BJ (cell line): ENCODE measurements at regions of chr9 and their contacts with region 1.

Region 1: GRCh38 chr9:121686930-121687541 is 35.6 kb downstream of the DAB2IP start:
- DNase-seq: no peak
- H3K4me3 ChIP-seq: no peak overlapping the region
- H3K27me3 ChIP-seq: no peaks in the 10 kb centered on the region
- CTCF ChIP-seq: peak; percentile 95

Region 2: DNA sequence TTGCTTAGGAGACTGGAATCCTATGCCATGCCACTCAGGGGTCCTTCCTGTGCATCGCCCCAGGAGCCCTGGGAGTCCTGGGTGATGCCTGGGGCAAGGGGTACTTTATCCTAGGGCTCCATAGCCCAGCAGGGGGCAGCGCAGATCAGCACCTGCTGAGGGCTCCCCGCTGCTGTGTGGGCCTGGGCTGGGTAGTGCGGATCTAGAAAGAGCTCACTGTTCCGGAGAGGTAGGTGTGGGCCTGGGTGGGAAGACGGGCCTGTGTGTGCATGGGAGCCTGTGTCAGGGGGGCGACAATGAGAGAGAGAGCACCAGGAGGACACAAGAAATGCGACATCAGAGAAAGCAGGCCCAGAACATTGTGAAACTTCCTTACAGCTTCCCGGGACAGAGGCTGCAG is 47.0 kb before region 1 on chr9:
- CTCF ChIA-PET with region 1: interaction called, 10 read pairs
- POLR2A ChIA-PET with region 1: no interaction called
- DNase-seq: no peak
- H3K4me3 ChIP-seq: no peak overlapping the region
- H3K27me3 ChIP-seq: no peaks in the 10 kb centered on the region; the same call in 1 of the 2 replicates
- CTCF ChIP-seq: peak; percentile 62

Region 3: DNA sequence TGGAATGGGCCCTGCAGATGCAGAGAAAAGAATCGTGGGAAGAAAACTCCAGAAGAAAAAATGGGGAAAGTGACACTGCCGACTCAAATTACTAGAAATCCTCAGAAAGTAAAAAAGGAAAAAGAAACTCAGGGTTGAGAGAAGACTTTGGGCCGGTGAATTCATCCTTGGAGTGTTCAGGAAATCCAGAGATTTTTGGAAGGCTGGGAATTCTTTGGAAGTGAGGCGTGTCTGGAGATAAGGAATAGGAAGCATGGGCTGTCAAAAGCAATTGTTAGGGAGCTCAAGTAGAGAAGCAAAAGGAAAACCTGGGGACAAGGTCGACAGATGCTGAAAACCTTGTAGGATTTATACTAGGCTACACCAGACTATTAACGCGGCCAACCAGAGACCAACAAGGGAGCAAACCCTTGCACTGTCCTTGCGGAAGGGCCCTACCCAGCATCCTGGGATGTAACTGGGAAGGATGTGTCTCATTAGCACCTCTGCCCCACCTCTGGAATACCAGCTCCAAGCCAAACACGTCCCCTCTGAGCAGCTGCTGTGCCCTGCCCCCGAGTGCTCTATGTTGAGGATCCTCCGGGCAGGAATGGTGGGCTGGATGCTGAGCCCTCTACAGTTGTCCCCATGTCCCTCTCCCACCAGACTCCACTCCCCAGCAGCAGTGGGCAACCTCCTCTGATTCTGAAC is 24.0 kb before region 1 on chr9:
- CTCF ChIA-PET with region 1: interaction called, 16 read pairs
- POLR2A ChIA-PET with region 1: no interaction called
- DNase-seq: no peak
- H3K4me3 ChIP-seq: no peak overlapping the region
- H3K27me3 ChIP-seq: no peaks in the 10 kb centered on the region
- CTCF ChIP-seq: no peak

Region 4: GRCh38 chr9:121698627-121699570 is 11.9 kb after region 1 on chr9:
- CTCF ChIA-PET with region 1: interaction called, 22 read pairs
- POLR2A ChIA-PET with region 1: no interaction called
- DNase-seq: no peak
- H3K4me3 ChIP-seq: peak overlapping the region; percentile 69
- H3K27me3 ChIP-seq: no peaks in the 10 kb centered on the region; the same call in 1 of the 2 replicates
- CTCF ChIP-seq: no peak

Region 5: GRCh38 chr9:121884057-121884541 is 197.1 kb after region 1 on chr9:
- CTCF ChIA-PET with region 1: no interaction called
- POLR2A ChIA-PET with region 1: no interaction called
- DNase-seq: no peak
- H3K4me3 ChIP-seq: no peak overlapping the region
- H3K27me3 ChIP-seq: no peaks in the 10 kb centered on the region
- CTCF ChIP-seq: no peak

Region 6: GRCh38 chr9:121992571-121993212 is 305.7 kb after region 1 on chr9:
- CTCF ChIA-PET with region 1: interaction called, 69 read pairs
- POLR2A ChIA-PET with region 1: no interaction called
- DNase-seq: no peak
- H3K4me3 ChIP-seq: no peak overlapping the region
- H3K27me3 ChIP-seq: no peaks in the 10 kb centered on the region
- CTCF ChIP-seq: peak; percentile 69